Activated naive CD4-positive, alpha-beta T cell treated with anti-CD3 and anti-CD28 coated beads, Interleukin-2, amount 10 ng/mL, durations not matched to agents 7 days and 5 days (primary cell): ENCODE measurements at regions of chr4 and their contacts with region 1.

Region 1: GRCh38 chr4:112099701-112100297 is 45.5 kb upstream of the FAM241A start:
- DNase-seq: no peak
- H3K4me3 Mint-ChIP-seq: no peak overlapping the region
- H3K27ac Mint-ChIP-seq: no peak overlapping the region
- H3K4me1 Mint-ChIP-seq: peaks cover 2% of the 10 kb centered on the region
- H3K27me3 Mint-ChIP-seq: no peaks in the 10 kb centered on the region

Region 2: DNA sequence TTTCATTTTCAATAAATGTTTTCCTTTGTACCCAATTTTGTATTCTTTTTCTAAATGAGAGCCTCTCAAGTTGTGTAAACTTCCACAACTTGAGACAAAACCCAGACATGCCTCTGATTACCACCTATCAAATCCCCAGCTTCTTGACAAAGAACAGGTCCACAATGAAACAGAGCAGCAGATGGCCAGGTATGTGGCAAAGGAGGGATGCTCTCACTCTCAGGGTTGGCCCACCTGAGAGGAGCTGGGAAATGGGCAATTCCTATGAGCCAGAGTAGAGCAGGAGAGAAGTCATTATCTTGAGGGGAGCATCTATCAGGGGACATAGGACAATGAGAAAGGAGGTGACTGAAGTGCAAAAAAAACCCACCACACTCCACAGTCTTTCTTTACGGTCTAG is 228.0 kb before region 1 on chr4:
- CTCF ChIA-PET with region 1: no interaction called
- DNase-seq: no peak
- H3K4me3 Mint-ChIP-seq: no peak overlapping the region
- H3K27ac Mint-ChIP-seq: no peak overlapping the region
- H3K4me1 Mint-ChIP-seq: no peaks in the 10 kb centered on the region
- H3K27me3 Mint-ChIP-seq: no peaks in the 10 kb centered on the region

Region 3: DNA sequence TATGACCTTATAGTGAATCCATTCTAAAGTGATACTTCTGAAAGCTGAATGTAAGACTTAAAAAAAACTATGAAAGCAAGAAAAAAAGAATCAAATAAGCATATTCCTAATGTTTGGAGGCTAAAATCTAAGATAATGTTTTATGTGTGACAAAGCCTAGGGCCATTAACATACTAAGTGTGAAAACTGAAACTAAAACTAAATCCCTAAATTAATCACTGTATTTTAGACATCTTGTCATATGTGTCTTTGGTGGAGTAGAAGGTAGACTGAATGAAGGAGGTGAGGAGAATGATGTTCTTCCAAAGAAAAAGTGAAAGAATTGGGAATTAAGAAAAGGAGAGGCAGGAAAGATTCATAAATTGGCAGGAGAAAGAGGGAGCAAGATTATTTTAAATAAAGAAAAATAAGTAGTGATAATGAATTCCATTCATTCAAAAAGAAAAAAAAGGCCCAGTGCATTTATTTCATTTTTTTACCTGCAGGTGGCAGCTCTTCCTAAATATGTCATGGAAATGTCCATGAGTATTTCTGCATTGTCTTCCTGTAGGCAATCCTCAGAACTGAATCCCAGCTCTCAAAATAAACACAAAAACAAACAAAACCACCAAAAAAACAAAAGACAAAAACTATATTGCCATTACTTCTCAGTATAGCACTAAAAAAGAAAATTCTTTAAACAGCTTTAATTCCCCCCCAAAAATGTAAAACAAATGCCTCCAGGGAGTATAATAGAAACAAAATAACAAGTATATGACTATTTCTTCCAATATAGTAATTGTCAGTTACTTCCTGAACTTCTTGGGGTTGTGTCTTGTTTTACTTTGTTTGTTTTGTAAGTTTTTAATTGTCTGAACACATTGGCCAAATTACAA is 114.8 kb after region 1 on chr4:
- CTCF ChIA-PET with region 1: interaction called, 17 read pairs
- DNase-seq: no peak
- H3K4me3 Mint-ChIP-seq: no peak overlapping the region
- H3K27ac Mint-ChIP-seq: no peak overlapping the region
- H3K4me1 Mint-ChIP-seq: peaks cover 5% of the 10 kb centered on the region
- H3K27me3 Mint-ChIP-seq: peaks cover 6% of the 10 kb centered on the region

Region 4: DNA sequence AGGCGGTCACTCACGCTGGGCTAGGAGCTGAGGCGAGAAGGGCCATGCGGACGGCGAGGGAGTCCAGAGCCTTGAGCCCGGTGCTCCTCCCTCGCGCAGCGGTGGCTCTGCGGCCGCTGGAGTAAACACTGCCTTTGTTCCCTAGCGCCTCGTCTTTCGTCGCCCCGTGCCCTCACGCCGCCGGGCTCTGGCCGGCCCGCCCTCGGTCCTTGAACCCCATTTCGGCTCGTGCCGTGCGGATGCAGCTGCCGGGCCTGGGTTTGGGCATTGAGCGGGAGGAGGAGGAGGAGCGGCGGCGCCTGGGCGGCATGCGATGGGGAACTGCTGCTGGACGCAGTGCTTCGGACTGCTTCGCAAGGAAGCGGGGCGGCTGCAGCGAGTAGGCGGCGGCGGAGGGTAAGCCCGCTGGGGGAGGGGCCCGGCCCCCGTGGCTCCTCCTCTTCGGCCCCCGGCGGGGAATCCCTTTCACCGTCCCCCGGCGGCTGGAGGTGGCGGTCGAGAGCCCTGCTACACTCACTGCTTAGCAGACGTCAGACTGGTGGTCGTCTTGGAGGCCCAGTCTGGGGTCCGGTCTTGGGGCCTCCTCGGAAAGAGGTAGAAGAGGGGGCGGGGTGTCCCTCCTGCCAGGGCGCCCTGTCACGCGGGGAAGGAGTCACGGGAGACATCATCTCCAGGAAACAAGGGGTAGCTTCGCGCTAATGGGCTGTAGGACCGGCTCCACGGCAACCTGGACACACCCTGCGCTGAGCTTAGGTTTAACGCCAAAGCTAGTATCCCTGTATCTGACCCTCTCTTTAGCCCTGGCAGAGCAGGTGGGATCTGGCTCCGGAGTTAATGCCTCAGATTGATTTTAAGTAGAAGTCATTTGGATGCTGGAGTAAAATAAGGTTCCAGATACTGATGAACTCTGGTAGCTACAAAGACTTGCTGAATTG is 132.2 kb after region 1 on chr4 and contains the start of gene AP1AR:
- CTCF ChIA-PET with region 1: interaction called, 104 read pairs
- DNase-seq: peak; percentile 85
- H3K4me3 Mint-ChIP-seq: peak within 1 kb of the TSS; percentile 78
- H3K27ac Mint-ChIP-seq: peak within 1 kb of the TSS; percentile 99
- H3K4me1 Mint-ChIP-seq: peaks cover 28% of the 10 kb centered on the region
- H3K27me3 Mint-ChIP-seq: peaks cover 9% of the 10 kb centered on the region

Region 5: DNA sequence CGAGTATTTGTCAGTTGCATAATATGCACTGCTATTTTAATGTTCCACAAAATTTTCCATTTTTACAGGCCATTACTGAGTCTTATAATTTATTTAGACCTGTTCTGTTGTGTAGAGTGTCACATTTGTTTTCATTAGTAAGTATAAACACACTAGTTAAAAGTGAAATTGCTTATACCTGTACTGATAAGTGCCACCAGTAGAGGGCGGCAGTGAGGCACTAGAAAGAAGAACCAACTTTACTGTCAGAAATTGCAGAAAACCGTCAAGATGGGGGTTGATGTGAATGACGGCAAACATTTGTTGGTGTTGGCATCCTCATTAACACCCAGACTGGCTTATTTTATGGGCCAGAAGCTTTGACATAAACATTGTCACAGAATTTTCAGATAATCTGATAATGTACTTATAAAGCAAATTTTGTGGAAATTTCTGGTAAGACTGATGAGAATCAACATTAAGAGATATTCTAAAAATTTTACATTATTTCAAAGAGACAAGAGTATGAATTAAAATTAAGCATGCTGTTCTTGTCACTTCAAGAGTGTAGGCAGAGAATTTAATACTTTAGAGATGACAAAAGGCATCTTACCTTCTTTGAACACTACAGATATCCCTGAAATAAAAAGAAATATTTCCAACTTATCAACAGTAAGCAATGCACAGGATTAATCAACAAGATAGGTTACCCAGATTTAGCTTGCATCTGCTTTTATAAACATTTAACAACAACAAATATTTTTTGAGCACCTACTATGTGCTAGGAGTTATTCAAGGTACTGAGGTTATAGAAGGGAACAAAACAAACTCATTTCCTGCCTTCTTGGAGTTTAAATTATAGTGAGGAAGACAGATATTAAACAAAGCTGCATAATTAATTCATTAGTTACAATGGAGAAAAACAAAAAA is 222.2 kb after region 1 on chr4:
- CTCF ChIA-PET with region 1: interaction called, 10 read pairs
- DNase-seq: peak; percentile 85
- H3K4me3 Mint-ChIP-seq: no peak overlapping the region
- H3K27ac Mint-ChIP-seq: no peak overlapping the region
- H3K4me1 Mint-ChIP-seq: peaks cover 10% of the 10 kb centered on the region
- H3K27me3 Mint-ChIP-seq: no peaks in the 10 kb centered on the region